Right ventricle myocardium inferior (tissue), 1 donor: ENCODE measurements at regions of chr2 and their contacts with region 1.

Region 1: DNA sequence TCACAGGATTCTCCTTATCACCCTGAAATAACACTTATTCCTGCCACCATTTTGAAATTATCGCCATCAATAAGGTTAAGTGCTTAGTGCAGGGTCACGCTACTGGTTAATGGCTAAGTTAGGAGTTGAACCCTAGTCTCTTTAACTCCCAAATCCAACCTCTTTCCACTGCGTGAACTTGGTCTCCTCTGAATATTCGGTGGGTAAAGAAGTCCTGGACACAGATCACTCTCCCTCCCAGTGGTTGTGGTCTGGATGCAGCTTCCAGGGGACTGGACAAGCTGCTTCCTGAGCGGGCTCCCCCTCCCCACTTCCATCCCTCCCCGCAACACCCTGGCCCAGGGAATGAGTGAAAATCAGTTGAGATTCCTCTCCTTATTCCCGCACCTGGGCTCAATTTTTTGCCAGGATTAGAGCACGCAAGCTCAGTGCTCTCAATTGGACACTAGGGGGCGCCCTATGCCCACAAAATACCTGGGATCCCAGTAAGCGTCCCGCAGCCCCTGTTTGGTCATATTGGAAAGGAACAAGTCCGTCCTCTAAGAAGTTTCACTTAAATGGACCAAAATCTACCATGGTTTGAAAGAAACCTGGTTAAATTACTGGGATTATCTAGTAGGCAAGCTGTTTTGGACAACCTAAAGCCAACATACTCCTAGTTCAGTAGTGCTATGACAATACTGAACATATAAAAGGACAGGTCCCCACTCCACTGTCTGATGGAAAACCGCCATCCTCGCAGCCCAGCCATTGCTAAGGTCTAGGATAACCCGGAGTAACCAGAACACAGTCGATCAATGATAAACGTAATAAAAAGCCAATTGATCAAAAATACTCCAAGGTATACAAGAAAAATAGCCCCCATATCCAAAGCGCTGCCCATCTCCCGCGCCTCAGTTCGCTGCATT is 40.4 kb downstream of the DHRS9 start:
- DNase-seq: peak; percentile 85
- ATAC-seq: peak; percentile 90

Region 2: DNA sequence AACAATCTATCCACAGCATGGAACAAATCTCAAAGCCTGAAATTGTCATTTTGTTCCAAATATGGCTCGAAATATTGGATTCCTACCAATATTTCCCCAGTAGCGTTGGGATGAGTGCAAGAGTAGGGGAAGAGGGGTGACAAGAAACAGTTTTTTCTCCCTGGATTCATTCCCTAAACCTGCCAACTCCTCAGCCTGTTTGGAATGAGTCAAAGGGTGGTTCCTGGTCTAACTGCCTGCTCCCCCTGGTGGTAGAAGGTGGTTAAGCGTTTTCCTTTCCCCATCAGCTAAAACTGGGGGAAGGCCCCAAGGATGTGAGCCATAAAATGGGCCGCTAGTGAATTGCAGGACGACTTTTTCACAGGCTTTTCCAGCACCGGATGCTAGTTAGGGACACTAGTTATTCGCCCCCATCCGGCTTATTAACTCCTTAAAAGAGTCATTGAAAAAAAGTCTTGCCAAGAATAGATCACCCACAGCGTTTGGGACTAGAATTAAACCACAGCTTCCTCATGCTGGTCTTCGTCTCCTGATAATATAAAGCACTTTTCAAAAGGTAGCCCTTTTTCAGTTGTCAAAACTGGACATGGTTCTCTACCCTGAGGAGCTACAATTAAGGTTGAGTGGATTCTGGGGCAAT is 32.1 kb after region 1 on chr2:
- intact Hi-C with region 1: loop called (anchors 2 kb)
- DNase-seq: no peak
- ATAC-seq: peak; percentile 54

Region 3: DNA sequence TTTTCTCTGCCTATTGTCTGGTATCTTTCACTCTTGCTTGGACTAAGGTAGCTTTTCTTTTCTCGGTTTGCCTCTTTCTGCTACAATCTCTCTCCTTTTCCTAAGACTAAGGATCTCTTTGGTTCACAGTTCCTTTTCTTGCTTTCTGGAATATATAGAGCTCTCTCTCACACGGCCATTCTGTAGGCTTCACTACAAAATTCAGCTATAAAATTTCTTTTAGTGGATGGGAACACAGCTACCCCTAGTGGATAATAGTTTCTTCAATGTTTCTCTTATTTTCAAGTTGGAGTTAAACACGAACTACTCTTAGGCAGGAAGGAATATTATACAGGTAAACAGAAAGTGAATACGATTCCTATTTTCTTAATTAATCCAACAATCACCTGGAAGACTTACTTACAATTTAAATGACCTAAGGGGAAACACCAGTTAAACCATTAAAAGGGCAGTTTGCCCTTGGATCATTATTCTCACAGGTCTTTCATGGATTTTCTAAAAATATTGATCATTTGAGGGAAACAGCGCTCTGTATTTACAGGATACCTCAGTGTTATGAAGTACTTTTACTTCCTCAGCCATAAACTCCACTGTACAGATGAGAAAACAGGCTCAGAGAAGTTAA is 112.1 kb after region 1 on chr2:
- intact Hi-C with region 1: loop called (anchors 2 kb)
- DNase-seq: no peak
- ATAC-seq: no peak

Region 4: DNA sequence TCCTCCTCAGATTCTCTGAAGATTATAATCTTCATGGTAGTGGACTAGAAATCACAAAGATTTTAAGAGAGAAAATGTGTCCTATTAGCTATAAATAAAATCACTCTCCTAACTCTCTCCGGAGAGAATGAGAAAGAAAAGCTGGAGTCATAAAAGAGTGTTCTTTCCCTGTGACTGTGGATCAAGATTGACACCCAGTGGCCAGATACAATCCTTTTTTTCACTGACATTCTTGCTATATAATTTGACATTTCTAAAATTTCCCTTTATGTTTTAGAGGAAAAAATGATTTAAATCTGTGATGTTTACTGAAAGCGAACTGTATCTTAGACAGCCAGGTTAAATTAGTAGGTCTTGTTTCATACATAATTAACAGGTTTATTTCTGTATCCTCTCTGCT is 287.9 kb after region 1 on chr2:
- intact Hi-C with region 1: loop called (anchors 10 kb)
- DNase-seq: no peak
- ATAC-seq: no peak